ENCODE measurements at regions of chr7 and their contacts with region 1.

Region 1: GRCh38 chr7:87564289-87564963 is 36.3 kb downstream of the ABCB1 start:
- DNase-seq: peak; percentile 15 to 57
- H3K4me3 ChIP-seq: no peak overlapping the region
- H3K27ac ChIP-seq: no peak overlapping the region
- H3K4me1 ChIP-seq: peaks cover 0 to 11% (median 1%) of the 10 kb centered on the region in 4 experiments; a peak in 2 of 7 replicates
- H3K27me3 ChIP-seq: no peaks in the 10 kb centered on the region
- CTCF ChIP-seq: peak; percentile 68 to 88 (median 80)
- EP300 ChIP-seq: no peak
- POLR2A ChIP-seq: no peak
- RAD21 ChIP-seq: peak; percentile 55 to 73

Region 2: GRCh38 chr7:87548123-87548919 is 16.1 kb before region 1 on chr7:
- CTCF ChIA-PET with region 1: interaction called, 22 read pairs
- POLR2A ChIA-PET with region 1: no interaction called
- DNase-seq: no peak
- H3K4me3 ChIP-seq: no peak overlapping the region
- H3K27ac ChIP-seq: no peak overlapping the region
- H3K4me1 ChIP-seq: no peaks in the 10 kb centered on the region; a peak in 1 of 7 replicates
- H3K27me3 ChIP-seq: no peaks in the 10 kb centered on the region
- CTCF ChIP-seq: no peak
- EP300 ChIP-seq: no peak
- POLR2A ChIP-seq: no peak
- RAD21 ChIP-seq: no peak

Region 3: DNA sequence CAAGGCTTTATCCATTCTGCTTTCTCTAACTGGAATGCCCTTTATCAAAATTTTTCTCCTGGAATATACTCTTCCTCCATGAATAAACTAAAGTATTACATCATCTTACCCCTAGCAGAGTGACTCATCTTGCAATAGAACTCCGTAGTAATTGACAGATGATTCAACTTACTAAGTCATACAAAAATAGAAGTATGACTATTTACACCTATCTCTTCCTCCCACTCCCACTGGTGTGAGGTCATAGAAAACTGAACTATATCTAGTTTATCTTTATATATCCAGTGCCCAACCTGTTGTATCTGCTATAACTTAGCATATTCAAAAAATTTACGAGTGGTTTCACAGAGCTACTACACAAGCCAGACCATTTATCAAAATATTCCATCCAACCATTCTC is 10.2 kb after region 1 on chr7:
- CTCF ChIA-PET with region 1: interaction called, 12 read pairs
- POLR2A ChIA-PET with region 1: no interaction called
- DNase-seq: no peak
- H3K4me3 ChIP-seq: no peak overlapping the region
- H3K27ac ChIP-seq: no peak overlapping the region
- H3K4me1 ChIP-seq: no peaks in the 10 kb centered on the region
- H3K27me3 ChIP-seq: no peaks in the 10 kb centered on the region
- CTCF ChIP-seq: no peak
- EP300 ChIP-seq: no peak
- POLR2A ChIP-seq: no peak
- RAD21 ChIP-seq: no peak